Left cardiac atrium (tissue), 4 donors: ENCODE measurements at regions of chr3 and their contacts with region 1.

Region 1: DNA sequence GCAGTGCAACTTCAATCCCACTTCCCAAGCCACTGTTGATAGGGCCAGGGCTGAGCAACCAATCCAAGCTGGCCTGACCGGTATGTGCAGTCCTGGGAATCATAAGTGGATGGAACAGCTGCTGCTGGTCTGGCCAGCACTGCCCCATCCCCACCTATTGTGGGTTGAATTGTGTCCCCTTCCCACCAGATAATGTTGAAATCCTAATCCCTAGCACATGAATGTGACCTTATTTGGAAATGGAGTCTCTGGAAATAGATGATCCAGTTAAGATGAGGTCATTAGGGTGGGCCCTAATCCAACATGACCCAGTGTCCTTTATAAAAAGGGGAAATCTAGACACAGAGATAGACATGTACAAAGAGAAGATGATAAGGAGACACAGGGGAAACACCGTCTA is 13.7 kb upstream of the PDIA5 start:
- DNase-seq: peak; percentile 55
- ATAC-seq: peak; percentile 38 to 92

Region 2: GRCh38 chr3:123201566-123202427 is 148.7 kb after region 1 on chr3 and contains the start of gene SEC22A:
- intact Hi-C with region 1: loop called in 1 of 2 experiments (anchors 10 kb)
- DNase-seq: peak; percentile 93
- ATAC-seq: peak; percentile 99 to 100
- total RNA-seq, gene SEC22A: 9.2 to 11.2 TPM